MCF 10A (cell line): ENCODE measurements at regions of chr14 and their contacts with region 1.

Region 1: DNA sequence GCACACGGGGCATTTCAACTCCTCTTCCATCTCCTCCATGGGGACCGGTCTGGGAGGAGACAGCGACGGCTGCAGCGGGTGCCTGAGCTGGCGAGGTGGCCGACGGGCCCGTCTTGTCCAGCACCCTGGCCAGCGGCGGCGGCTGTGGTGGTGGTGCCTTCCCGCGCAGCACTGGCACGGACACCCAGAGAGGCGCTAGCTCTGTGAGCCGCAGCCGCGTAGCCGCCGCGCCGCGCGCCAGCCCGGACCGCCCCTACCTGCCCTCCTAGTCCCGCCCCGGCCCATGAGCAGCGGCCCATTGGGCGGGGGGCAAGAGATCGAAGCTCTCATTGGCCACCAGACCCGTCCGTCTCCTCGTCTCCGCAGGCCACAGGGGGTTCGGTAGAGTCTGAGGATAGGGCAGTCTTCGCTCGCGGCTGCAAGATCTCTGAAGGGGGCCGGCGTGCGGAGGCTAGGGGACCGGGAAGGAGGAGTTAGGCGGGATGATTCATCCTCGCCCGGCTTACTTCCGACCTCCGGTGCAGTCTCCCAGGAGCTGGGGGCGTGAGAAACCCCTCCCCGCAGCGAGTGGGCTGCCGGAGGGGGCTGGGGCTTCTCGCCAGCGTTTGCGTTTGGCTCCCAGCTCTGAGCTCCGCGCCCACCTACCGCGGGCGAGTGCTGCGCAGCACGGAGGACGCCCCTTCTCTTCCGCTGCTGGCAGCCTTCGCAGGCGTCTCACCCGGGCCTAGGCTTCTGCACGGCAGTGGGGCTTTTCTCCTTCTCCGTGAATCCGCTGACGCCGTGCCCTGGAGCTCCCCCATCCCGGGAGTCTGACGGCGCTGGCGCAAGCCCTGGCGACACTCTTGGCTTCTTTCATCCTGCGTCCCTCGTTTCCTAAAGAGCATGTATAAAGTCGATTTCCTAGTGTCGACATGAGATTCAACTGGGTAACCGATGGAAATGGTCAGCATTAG is at the start of gene TRIM9:
- DNase-seq: peak; percentile 98
- H3K4me3 Mint-ChIP-seq: peak within 1 kb of the TSS; percentile 85
- H3K27ac Mint-ChIP-seq: peak within 1 kb of the TSS; percentile 46
- H3K4me1 Mint-ChIP-seq: no peaks in the 10 kb centered on the region
- H3K27me3 Mint-ChIP-seq: peaks cover 21% of the 10 kb centered on the region
- CTCF ChIP-seq: no peak
- total RNA-seq, gene TRIM9: 0.19 TPM in 1 of 2 replicates, not detected in the other

Region 2: GRCh38 chr14:51107801-51108200 is 12.6 kb after region 1 on chr14:
- CTCF ChIA-PET with region 1: interaction called, 3 read pairs
- POLR2A ChIA-PET with region 1: interaction called, 11 read pairs
- intact Hi-C with region 1: no loop called
- DNase-seq: no peak
- H3K4me3 Mint-ChIP-seq: no peak overlapping the region
- H3K27ac Mint-ChIP-seq: no peak overlapping the region
- H3K4me1 Mint-ChIP-seq: no peaks in the 10 kb centered on the region
- H3K27me3 Mint-ChIP-seq: peaks cover 35% of the 10 kb centered on the region
- CTCF ChIP-seq: no peak